ENCODE measurements at regions of chr3 and their contacts with region 1.

Region 1: GRCh38 chr3:194871143-194871863 is 185.6 kb downstream of the FAM43A start:
- DNase-seq: peak in 1 of 2 donors; percentile 61
- ATAC-seq: peak; percentile 49 to 76 (median 70)
- H3K4me3 ChIP-seq: no peak overlapping the region
- H3K27ac ChIP-seq: peak overlapping the region in 9 of 10 donors; percentile 40 to 83 (median 75)
- H3K4me1 ChIP-seq: peaks cover 18 to 58% (median 45%) of the 10 kb centered on the region in 9 donors
- H3K27me3 ChIP-seq: no peaks in the 10 kb centered on the region
- CTCF ChIP-seq: peak in 2 of 9 donors; percentile 10 to 18

Region 2: GRCh38 chr3:194769020-194769643 is 102.2 kb before region 1 on chr3:
- intact Hi-C with region 1: loop called in 1 of 10 experiments (anchors 10 kb)
- DNase-seq: peak; percentile 86 to 96
- ATAC-seq: peak; percentile 98 to 99 (median 98)
- H3K4me3 ChIP-seq: peak overlapping the region; percentile 6 to 55 (median 46)
- H3K27ac ChIP-seq: peak overlapping the region in 9 of 10 donors; percentile 11 to 82 (median 60)
- H3K4me1 ChIP-seq: peaks cover 6 to 42% (median 22%) of the 10 kb centered on the region in 9 donors
- H3K27me3 ChIP-seq: no peaks in the 10 kb centered on the region
- CTCF ChIP-seq: no peak

Region 3: GRCh38 chr3:194782698-194783404 is 88.5 kb before region 1 on chr3:
- intact Hi-C with region 1: loop called in 4 of 10 experiments (anchors 5 to 10 kb)
- DNase-seq: no peak
- ATAC-seq: peak in 5 of 8 donors; percentile 36 to 68 (median 50)
- H3K4me3 ChIP-seq: no peak overlapping the region
- H3K27ac ChIP-seq: peak overlapping the region in 6 of 10 donors; percentile 7 to 63 (median 37)
- H3K4me1 ChIP-seq: peaks cover 11 to 46% (median 30%) of the 10 kb centered on the region in 9 donors
- H3K27me3 ChIP-seq: no peaks in the 10 kb centered on the region
- CTCF ChIP-seq: no peak

Region 4: DNA sequence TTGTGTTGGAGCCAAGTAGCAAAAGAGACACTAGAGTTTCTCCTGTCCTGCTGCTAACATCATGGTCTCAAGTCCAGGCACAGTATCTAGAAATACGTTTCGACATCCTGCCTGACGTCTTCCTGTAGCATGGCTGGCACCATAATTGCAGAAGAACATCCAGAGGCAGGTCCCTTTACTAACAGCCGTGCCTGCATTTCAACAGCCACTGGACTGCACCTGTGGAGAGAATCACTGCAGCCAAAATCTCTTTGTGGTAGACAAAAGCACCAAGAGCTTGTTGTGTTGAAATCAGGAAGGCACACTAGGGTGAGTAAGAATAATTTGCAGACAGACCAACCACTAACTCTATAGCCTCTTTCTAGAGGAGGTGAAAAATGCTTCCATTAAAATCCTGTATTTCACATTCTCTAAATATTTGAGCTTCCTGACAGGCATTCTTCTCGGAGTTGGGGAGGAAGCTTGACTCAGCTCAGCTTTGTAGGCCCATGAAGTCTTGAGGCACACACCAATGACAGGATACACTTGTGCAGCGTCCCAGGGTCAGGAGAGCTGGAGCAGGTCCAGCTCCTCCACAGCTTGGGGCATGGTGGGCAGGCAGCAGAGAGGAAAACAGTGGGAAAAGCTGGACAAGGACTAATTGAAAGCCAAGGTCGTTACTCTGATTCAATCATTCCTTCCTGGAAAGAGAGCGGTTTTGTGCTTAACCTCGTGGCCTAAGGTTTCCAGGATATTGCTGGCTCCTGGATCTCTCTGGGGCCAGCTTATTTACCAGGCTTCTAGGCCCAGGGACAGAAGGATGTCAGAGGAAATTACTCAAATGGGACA is 59.3 kb after region 1 on chr3:
- intact Hi-C with region 1: loop called in 1 of 10 experiments (anchors 5 kb)
- DNase-seq: peak in 1 of 2 donors; percentile 61
- ATAC-seq: peak; percentile 66 to 89 (median 84)
- H3K4me3 ChIP-seq: no peak overlapping the region
- H3K27ac ChIP-seq: peak overlapping the region; percentile 42 to 84 (median 80)
- H3K4me1 ChIP-seq: peaks cover 19 to 67% (median 48%) of the 10 kb centered on the region in 9 donors
- H3K27me3 ChIP-seq: no peaks in the 10 kb centered on the region
- CTCF ChIP-seq: no peak

Region 5: GRCh38 chr3:194952841-194953241 is 81.5 kb after region 1 on chr3:
- intact Hi-C with region 1: loop called in 1 of 10 experiments (anchors 5 kb)
- DNase-seq: peak in 1 of 2 donors; percentile 48
- ATAC-seq: peak; percentile 52 to 84 (median 76)
- H3K4me3 ChIP-seq: no peak overlapping the region
- H3K27ac ChIP-seq: peak overlapping the region in 9 of 10 donors; percentile 24 to 81 (median 49)
- H3K4me1 ChIP-seq: peaks cover 7 to 47% (median 24%) of the 10 kb centered on the region in 9 donors
- H3K27me3 ChIP-seq: no peaks in the 10 kb centered on the region
- CTCF ChIP-seq: no peak

Region 6: GRCh38 chr3:195042735-195043606 is 171.7 kb after region 1 on chr3:
- intact Hi-C with region 1: no loop called
- DNase-seq: no peak
- ATAC-seq: no peak
- H3K4me3 ChIP-seq: no peak overlapping the region
- H3K27ac ChIP-seq: no peak overlapping the region
- H3K4me1 ChIP-seq: no peaks in the 10 kb centered on the region
- H3K27me3 ChIP-seq: no peaks in the 10 kb centered on the region
- CTCF ChIP-seq: no peak

Region 7: GRCh38 chr3:195080571-195081151 is 209.4 kb after region 1 on chr3:
- intact Hi-C with region 1: loop called in 1 of 10 experiments (anchors 10 kb)
- DNase-seq: peak; percentile 60 to 76
- ATAC-seq: peak; percentile 75 to 93 (median 90)
- H3K4me3 ChIP-seq: no peak overlapping the region
- H3K27ac ChIP-seq: peak overlapping the region; percentile 26 to 97 (median 81)
- H3K4me1 ChIP-seq: peaks cover 16 to 46% (median 39%) of the 10 kb centered on the region in 9 donors
- H3K27me3 ChIP-seq: no peaks in the 10 kb centered on the region
- CTCF ChIP-seq: no peak

Region 8: DNA sequence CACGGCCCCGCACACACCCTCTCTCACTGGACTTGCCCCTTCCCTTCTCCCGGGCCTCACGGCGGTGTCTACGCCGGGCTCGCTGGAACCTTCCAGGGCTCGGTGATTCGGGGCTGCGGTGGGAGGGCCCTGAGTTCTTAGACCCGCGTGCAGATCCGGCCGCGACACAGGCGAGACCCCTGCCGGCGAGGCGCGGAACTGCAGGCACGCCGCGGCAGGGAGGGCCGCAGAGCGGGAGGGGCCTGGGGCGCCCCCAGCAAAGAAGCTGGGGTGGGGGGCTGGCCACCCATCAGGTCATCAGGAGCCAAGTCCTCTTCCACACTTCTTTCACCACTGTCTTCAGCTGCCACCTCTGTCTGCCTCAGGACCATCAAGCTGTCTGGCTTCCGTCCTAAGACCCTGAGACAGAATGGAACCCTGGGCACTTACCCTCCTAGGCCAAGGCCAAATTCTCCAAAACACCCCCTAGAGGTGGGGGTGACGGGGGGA is 235.2 kb after region 1 on chr3:
- intact Hi-C with region 1: loop called in 2 of 10 experiments (anchors 10 kb)
- DNase-seq: peak; percentile 66 to 80
- ATAC-seq: peak; percentile 65 to 86 (median 80)
- H3K4me3 ChIP-seq: peak overlapping the region in 7 of 10 donors; percentile 2 to 44 (median 32)
- H3K27ac ChIP-seq: peak overlapping the region in 2 of 10 donors; percentile 10 to 44
- H3K4me1 ChIP-seq: peaks cover 7 to 41% (median 19%) of the 10 kb centered on the region in 9 donors
- H3K27me3 ChIP-seq: no peaks in the 10 kb centered on the region
- CTCF ChIP-seq: peak; percentile 99 to 100 (median 100)

Region 9: DNA sequence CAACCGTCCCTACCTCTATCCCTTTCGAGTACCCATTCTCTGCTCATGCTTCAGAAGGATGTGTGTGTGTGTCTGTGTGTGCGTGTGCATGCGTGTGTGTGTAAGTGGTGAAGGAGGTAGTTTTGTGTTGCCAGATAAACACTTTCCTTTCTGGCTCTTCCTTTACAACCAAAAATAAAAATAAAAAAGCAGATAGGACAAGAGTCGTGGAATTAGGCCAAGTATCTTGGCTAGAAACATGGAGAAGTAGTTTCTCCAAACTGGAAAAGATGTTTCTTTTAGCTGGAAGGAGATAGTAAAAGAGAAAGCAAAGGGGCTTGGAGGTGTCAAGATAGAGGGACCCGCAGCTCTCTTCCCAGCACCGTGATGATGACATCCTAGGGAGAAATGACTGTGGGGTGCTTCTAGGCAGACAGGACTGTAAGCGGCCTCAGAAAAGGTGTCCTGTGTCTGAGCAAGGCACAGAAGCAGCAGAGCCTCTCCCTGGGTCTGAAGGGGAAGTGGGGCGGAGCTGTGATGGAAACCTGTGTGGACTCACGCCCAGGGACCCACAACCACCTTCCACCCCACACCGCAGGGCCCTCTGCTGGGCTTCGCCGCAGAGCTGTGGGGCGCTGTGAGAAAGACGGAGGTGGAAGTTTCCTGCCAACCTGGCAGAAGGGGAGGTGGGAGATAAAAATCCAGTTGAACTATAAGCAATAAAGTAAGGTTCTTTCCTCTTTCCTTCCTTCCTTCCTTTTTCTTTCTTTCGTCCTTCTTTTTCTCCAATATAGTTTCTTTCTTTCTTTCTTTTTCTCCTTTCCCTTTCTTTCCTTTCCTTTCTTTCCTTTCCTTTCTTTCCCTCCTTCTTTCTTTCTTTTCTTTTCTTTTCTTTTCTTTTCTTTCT is 884.7 kb after region 1 on chr3:
- intact Hi-C with region 1: no loop called
- DNase-seq: no peak
- ATAC-seq: no peak
- H3K4me3 ChIP-seq: no peak overlapping the region
- H3K27ac ChIP-seq: no peak overlapping the region
- H3K4me1 ChIP-seq: peaks cover 0 to 20% (median 10%) of the 10 kb centered on the region in 9 donors
- H3K27me3 ChIP-seq: peaks cover 0 to 57% (median 37%) of the 10 kb centered on the region in 7 donors
- CTCF ChIP-seq: no peak